Activated naive CD4-positive, alpha-beta T cell treated with anti-CD3 and anti-CD28 coated beads for 36 hours (primary cell): ENCODE measurements at regions of chr11 and their contacts with region 1.

Region 1: DNA sequence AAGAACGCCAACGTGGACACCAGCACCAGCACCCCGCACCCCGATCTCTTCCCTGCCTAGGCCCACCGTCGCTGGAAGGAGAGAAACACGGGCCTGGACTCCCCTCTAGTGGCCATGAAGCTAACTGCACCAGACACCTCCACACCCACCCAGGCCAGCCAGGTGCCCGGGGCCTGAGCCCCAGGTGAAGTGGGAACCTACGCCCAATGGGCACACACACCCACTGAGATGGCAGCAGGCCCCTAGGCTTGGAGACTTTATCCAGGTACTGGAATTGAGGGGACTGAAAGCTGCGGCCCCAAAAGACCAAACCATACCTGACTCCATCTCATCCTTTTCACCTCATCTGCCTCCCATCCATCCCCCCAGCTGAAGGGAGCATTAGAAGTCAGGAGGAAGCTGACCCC is 81.0 kb downstream of the BUD13 start:
- DNase-seq: peak; percentile 68
- H3K4me3 Mint-ChIP-seq: no peak overlapping the region
- H3K27ac Mint-ChIP-seq: no peak overlapping the region
- H3K4me1 Mint-ChIP-seq: peaks cover 2% of the 10 kb centered on the region
- H3K27me3 Mint-ChIP-seq: peaks cover 3% of the 10 kb centered on the region

Region 2: DNA sequence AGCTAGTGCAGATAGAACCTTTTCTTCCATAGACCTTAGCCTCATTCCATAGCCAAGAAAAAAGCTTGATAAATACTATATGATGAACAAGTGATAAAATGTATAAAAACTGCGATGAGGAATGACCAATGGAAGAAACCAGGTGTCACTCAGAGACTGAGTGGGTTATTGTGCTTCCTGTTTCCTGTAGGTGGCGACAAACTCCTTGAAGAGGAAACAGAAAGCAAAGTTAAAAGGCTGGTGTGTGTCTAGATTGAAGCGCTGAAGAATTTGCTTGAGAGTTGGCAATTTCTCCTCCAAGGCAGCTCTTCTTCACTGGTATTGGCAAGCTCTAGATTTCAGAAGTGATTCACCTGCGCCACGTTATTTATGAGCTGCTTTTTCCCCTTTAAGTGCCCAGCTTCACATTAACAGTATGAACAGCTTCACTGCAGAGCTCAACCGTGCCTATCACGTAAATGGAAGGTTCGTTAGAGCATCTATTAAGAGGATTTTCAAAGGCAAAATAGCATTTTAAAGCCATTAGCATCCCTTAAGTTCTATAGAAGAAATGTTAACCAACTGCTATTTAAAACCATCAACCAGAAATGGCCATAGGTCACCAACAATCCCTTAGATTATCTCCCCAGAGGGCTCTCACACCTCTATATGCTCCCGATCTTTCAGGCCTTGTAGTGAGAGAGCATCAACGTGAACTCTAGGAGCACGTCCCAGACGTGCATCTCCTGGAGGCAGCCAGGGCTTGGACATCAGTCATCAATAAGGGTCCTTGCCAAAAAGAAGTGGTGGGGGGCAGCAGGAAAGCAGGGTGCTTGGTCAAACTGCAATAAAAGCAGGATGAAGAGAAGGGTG is 1367.0 kb before region 1 on chr11:
- CTCF ChIA-PET with region 1: no interaction called
- intact Hi-C with region 1: loop called (anchors 5 kb)
- DNase-seq: peak; percentile 34
- H3K4me3 Mint-ChIP-seq: no peak overlapping the region
- H3K27ac Mint-ChIP-seq: no peak overlapping the region
- H3K4me1 Mint-ChIP-seq: peaks cover 2% of the 10 kb centered on the region
- H3K27me3 Mint-ChIP-seq: peaks cover 3% of the 10 kb centered on the region

Region 3: GRCh38 chr11:116217006-116217405 is 474.8 kb before region 1 on chr11:
- CTCF ChIA-PET with region 1: no interaction called
- intact Hi-C with region 1: loop called (anchors 10 kb)
- DNase-seq: peak; percentile 32
- H3K4me3 Mint-ChIP-seq: no peak overlapping the region
- H3K27ac Mint-ChIP-seq: no peak overlapping the region
- H3K4me1 Mint-ChIP-seq: no peaks in the 10 kb centered on the region
- H3K27me3 Mint-ChIP-seq: peaks cover 2% of the 10 kb centered on the region

Region 4: GRCh38 chr11:116454020-116454645 is 237.6 kb before region 1 on chr11:
- CTCF ChIA-PET with region 1: interaction called, 8 read pairs
- intact Hi-C with region 1: loop called (anchors 1 kb)
- DNase-seq: peak; percentile 46
- H3K4me3 Mint-ChIP-seq: no peak overlapping the region
- H3K27ac Mint-ChIP-seq: no peak overlapping the region
- H3K4me1 Mint-ChIP-seq: no peaks in the 10 kb centered on the region
- H3K27me3 Mint-ChIP-seq: peaks cover 13% of the 10 kb centered on the region

Region 5: DNA sequence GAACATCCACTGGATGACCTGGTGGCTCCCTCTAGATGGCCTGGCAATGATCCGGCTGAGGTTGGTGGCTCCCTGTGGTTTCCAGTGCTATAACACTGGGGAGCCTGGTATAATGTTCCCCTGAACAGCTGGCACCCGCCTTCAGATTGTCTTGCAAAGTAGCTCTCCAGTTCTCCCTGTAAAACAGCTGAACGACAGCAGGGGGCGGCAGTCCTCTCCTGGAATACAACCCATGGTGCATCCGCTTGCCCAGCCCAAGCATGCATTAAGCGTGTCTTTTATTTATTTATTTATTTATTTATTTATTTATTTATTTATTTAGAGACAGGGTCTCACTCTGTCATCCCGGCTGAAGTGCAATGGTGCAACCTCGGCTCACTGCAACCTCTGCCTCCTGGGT is 177.9 kb before region 1 on chr11:
- CTCF ChIA-PET with region 1: interaction called, 6 read pairs
- intact Hi-C with region 1: loop called (anchors 1 kb)
- DNase-seq: peak; percentile 60
- H3K4me3 Mint-ChIP-seq: no peak overlapping the region
- H3K27ac Mint-ChIP-seq: no peak overlapping the region
- H3K4me1 Mint-ChIP-seq: no peaks in the 10 kb centered on the region
- H3K27me3 Mint-ChIP-seq: peaks cover 8% of the 10 kb centered on the region

Region 6: DNA sequence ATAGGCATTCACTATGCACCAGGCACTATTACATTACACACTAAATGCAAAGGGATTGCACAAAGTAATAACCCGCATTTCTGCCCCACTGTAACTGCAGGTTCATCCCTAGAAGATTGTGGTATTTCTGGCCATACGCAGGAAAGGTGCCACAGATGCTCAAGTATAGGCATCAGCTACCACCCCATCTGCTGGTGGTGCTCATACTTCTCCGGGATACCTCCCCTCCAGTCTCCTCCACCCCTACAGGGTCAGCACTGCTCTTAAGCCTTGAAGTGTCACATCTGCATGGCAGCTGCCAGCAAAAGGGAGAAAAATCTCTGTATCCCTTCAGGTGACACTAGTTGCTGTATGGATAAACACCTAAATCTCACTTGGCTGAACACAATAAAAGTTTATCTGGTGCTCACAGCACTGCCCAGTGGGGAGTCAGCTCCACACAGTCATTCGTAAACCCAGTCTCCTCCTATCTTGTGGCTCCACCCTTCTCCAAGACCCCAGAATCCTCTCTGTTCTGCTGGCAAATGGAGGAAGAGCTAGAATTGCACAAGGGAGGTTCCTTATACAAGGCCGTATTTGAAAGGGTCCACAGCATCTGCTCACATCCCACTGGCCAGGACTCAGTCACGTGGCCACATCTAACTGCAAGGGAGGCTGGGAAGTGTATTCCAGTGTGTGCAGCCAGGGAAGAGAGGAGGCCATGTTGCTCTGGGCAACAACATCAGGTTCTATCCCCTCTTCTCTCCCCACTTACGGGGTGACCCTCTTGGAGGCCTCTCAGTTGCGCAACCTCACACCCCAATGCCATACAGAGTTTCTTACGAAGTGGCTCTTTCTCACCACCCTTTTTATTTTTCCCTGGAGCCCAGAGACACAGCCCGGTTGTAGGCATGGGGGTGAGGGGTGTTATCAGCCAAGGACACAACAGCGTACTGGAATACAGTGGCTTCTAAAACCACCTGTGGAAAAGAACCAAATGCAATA is 33.6 kb before region 1 on chr11:
- CTCF ChIA-PET with region 1: no interaction called
- intact Hi-C with region 1: no loop called
- DNase-seq: no peak
- H3K4me3 Mint-ChIP-seq: no peak overlapping the region
- H3K27ac Mint-ChIP-seq: no peak overlapping the region
- H3K4me1 Mint-ChIP-seq: no peaks in the 10 kb centered on the region
- H3K27me3 Mint-ChIP-seq: peaks cover 18% of the 10 kb centered on the region